ENCODE measurements at regions of chr12 and their contacts with region 1.

Region 1: DNA sequence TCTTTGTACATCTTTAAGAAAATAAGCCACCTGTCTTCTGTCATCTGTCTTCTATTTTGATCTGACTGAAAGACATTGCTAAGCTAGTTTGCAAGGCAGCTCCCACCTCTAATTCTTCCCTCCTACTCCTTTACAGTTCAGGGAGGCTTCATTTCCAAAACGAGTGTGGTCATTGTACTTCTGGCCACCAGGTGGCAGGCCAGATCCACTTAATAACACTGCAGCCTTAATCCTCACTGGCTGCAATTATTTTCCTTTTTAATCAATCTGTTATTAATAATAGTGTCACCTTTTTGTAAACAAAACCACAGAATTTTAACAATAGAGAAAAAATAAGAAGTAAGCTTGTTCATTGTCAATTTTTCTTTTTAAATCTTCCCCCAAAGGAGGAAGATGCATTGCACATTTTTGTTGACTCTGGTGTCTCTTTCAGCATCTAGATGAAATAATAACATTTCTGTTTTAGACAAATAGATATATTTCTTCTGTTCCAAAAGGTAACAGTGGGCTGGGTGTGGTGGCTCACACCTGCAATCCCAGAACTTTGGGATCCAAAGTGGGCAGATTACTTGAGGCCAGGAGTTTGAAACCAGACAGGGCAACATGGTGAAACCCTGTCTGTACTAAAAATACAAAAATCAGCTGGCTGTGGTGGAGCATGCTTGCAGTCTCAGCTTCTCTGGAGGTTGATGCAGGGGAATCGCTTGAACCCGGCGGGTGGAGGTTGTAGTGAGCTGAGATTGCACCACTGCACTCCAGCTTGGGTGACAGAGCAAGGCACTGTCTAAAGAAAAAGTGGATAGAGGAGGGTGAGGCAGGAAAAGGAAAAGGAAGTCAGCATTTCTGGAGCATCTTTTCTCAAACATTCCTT is 23.3 kb downstream of the GABARAPL1 start:
- DNase-seq: no peak
- H3K4me3 ChIP-seq: no peak overlapping the region
- H3K27ac ChIP-seq: no peak overlapping the region
- H3K27me3 ChIP-seq: no peaks in the 10 kb centered on the region
- CTCF ChIP-seq: peak; percentile 83

Region 2: DNA sequence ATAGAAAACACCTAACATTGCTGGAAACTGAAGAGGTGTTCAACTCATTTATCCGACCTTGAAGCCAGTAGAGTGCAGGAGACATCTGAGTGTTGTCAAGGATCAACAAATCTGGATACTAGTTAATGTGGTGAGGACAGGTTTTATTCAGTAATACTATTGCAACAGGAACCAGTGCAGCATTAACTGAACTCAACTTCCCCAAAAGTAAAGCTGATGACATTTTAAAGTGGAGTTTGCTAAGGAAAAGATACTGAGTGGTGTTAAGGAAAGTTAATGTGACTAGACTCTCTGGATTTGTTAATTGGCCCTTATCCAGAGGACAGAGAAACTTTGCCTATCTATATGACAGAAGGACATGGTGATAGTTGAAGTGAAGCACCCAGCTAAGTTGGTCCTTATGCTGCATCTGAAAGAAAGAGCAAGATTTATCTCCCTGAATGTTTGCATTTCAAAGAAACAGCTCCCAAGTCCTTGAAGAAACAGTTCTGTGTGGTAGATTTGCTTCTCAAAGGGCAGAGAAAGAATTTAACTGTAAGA is 104.8 kb before region 1 on chr12:
- CTCF ChIA-PET with region 1: no interaction called
- POLR2A ChIA-PET with region 1: no interaction called
- DNase-seq: no peak
- H3K4me3 ChIP-seq: no peak overlapping the region
- H3K27ac ChIP-seq: no peak overlapping the region
- H3K27me3 ChIP-seq: no peaks in the 10 kb centered on the region
- CTCF ChIP-seq: no peak

Region 3: DNA sequence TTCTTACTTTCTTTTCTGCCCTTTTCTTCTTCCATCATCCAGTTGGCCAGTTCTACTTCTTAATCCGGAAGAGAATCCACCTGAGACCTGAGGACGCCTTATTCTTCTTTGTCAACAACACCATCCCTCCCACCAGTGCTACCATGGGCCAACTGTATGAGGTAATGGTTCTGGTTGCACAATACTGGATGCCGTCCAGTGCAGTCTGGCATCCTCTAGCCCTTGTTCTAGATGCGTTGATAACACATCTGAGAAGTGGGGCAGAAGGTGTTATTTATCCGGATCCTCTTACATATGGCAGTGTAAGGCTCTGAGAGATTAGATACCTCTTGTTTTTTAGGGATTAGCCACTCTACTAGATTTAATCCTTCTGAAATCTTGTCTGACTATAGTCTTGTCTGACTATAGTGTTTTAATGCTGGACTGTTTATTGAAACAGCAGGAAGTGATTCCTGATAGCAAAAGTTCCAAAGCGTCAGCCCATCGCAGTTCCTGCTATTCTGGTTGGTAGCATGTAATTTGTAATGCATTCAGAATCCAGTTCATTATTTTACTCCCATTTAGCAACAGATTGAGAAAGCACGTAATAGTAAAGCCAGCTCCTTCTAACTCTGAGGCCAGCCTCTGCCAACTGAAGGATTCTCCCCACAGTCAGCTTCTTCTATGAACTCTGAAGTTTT is 15.5 kb before region 1 on chr12:
- CTCF ChIA-PET with region 1: interaction called, 38 read pairs
- POLR2A ChIA-PET with region 1: no interaction called
- DNase-seq: no peak
- H3K4me3 ChIP-seq: no peak overlapping the region
- H3K27ac ChIP-seq: no peak overlapping the region
- H3K27me3 ChIP-seq: no peaks in the 10 kb centered on the region
- CTCF ChIP-seq: no peak

Measured in AG04450 (cell line).